Activated CD4-positive, alpha-beta T cell treated with anti-CD3 and anti-CD28 coated beads for 36 hours (primary cell): ENCODE measurements at regions of chr12 and their contacts with region 1.

Region 1: GRCh38 chr12:120249875-120250795 is 15.4 kb downstream of the PXN start:
- DNase-seq: peak; percentile 51
- ATAC-seq: peak; percentile 10
- H3K4me3 Mint-ChIP-seq: peak overlapping the region; percentile 10
- H3K27ac Mint-ChIP-seq: peak overlapping the region; percentile 74
- H3K4me1 Mint-ChIP-seq: peaks cover 80% of the 10 kb centered on the region
- H3K27me3 Mint-ChIP-seq: no peaks in the 10 kb centered on the region

Region 2: GRCh38 chr12:120200364-120200800 is 49.8 kb before region 1 on chr12:
- CTCF ChIA-PET with region 1: interaction called, 5 read pairs
- POLR2A ChIA-PET with region 1: interaction called, 15 read pairs
- intact Hi-C with region 1: no loop called
- DNase-seq: no peak
- ATAC-seq: no peak
- H3K4me3 Mint-ChIP-seq: peak overlapping the region; percentile 98
- H3K27ac Mint-ChIP-seq: peak overlapping the region; percentile 99
- H3K4me1 Mint-ChIP-seq: peaks cover 39% of the 10 kb centered on the region
- H3K27me3 Mint-ChIP-seq: no peaks in the 10 kb centered on the region

Region 3: GRCh38 chr12:120234643-120235368 is 15.3 kb before region 1 on chr12:
- CTCF ChIA-PET with region 1: interaction called, 518 read pairs
- POLR2A ChIA-PET with region 1: interaction called, 5 read pairs
- intact Hi-C with region 1: loop called (anchors 1 kb)
- DNase-seq: no peak
- ATAC-seq: no peak
- H3K4me3 Mint-ChIP-seq: no peak overlapping the region
- H3K27ac Mint-ChIP-seq: peak overlapping the region; percentile 65
- H3K4me1 Mint-ChIP-seq: peaks cover 85% of the 10 kb centered on the region
- H3K27me3 Mint-ChIP-seq: no peaks in the 10 kb centered on the region